HEK293T (cell line): ENCODE measurements at regions of chr16 and their contacts with region 1.

Region 1: GRCh38 chr16:1942810-1943726 is at the start of gene MSRB1:
- DNase-seq: peak; percentile 100

Region 2: GRCh38 chr16:1923299-1924034 is 19.6 kb before region 1 on chr16:
- CTCF ChIA-PET with region 1: interaction called, 19 read pairs
- POLR2A ChIA-PET with region 1: interaction called, 8 read pairs
- DNase-seq: peak; percentile 76

Region 3: DNA sequence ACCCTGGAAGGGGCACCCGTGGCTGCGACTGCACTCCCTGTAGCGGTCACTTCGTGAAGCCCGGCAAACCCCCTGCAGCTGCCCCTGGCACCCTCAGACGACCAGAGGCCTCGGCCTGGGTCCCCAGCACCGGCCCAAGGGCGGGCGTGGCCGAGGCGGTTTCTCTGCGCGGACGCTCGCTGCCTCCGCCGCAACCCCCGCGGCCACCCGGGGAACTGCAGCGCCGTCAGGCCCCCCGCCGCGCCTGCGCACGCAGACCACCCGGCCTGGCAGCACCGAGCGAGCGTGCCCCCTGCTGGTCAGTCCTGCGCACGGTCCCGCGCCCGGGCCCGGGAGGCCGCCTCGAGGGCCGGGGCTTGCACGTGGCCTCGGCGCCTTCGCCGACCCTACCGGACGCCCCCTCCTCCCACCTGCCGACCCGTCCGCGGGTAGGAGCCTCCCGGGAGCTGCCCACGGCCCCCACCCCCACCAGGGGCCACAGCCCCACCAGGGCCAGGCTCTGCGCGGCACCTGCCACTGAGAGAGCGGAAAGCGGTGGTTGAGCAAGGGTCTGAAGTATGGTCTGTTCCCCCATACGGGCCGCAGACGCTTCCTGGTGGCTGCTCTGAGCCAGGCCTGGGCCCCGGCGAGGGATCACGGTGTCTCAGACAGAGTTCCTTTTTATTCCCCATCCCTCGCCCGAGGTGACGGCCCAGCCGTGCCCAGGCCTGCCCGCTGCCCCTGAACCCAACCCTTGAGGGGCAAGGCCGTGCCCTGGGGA is 13.3 kb before region 1 on chr16:
- CTCF ChIA-PET with region 1: interaction called, 19 read pairs
- POLR2A ChIA-PET with region 1: interaction called, 8 read pairs
- DNase-seq: peak; percentile 99

Region 4: DNA sequence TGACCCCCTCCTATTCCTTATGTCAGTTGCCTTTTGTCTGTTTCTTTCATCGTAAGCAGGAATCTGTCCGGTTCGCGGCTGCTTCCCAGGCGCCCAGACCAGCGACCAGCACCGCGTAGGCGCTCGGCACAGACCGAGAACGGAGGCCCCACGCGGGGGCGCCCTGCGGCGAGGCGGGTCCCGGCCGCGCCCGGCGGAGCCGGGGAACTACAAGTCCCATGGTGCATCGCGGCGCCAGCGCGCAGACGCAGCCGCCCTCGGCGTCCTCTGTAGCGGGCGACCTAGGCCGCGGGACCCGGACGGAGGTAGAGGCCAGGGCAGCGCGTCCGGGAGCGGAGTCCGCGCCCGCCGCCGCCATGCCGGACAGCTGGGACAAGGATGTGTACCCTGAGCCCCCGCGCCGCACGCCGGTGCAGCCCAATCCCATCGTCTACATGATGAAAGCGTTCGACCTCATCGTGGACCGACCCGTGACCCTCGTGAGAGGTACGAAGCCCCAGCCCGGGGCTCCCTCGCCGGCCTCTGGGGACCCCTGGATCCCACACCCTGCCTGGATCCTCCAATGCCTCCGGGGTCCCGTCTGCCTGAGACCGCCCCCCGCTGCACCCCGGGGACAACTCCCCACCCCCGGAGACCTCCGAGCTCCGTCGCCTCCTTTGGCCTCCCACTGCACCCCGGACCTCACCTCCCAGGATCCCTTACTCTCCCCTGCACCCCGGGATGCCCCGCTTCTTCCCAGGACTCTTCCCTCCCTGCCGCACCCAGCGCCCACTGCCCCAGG is 16.4 kb after region 1 on chr16 and contains the start of gene NDUFB10:
- CTCF ChIA-PET with region 1: interaction called, 36 read pairs
- POLR2A ChIA-PET with region 1: interaction called, 95 read pairs
- DNase-seq: peak; percentile 92

Region 5: DNA sequence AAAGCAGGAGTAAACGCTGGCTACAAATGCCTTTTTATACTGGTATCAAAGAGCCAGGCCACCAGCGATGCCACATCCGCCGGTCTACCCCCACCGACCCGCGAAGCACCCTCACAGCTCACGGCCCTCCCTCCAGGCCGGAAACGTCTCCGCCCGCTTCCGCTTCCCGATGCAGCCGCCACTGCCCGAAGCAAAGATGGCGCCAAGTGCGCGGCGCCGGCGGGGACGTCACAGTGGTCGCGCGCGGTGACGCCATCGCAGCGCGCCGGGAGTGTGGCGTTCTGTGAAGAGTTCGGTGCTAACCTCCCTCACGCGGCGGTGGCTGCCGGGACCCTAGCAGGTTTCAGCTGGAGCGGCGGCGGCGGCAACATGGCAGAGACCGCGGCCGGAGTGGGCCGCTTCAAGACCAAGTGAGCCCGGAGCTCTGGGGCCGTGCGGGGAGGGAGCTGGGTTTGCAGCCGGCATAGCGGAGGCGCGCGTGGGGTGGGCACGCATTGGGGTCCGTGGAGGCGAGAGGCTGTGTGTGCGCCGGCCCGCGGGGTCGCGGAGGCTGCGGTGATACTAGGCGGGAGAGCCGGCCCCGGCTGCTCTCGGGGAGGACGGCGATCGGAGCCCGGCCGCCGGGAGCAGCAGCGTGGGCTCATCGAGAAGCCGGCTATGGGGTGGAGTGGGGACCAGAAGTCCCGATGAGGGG is 28.9 kb after region 1 on chr16 and contains the start of gene TBL3:
- CTCF ChIA-PET with region 1: interaction called, 3 read pairs
- POLR2A ChIA-PET with region 1: interaction called, 10 read pairs
- DNase-seq: peak; percentile 95

Region 6: GRCh38 chr16:2095315-2095853 is 152.3 kb after region 1 on chr16:
- CTCF ChIA-PET with region 1: no interaction called
- POLR2A ChIA-PET with region 1: no interaction called
- DNase-seq: no peak